CD4-positive, alpha-beta memory T cell (primary cell): ENCODE measurements at regions of chr11 and their contacts with region 1.

Region 1: GRCh38 chr11:62169091-62169847 is 20.7 kb upstream of the SCGB1D1 start:
- DNase-seq: no peak
- H3K4me3 ChIP-seq: no peak overlapping the region
- H3K4me3 Mint-ChIP-seq: no peak overlapping the region
- H3K27ac ChIP-seq: no peak overlapping the region
- H3K27ac Mint-ChIP-seq: no peak overlapping the region
- H3K4me1 ChIP-seq: no peaks in the 10 kb centered on the region
- H3K4me1 Mint-ChIP-seq: peaks cover 4 to 6% (median 5%) of the 10 kb centered on the region in 4 donors
- H3K27me3 ChIP-seq: no peaks in the 10 kb centered on the region
- H3K27me3 Mint-ChIP-seq: peaks cover 31 to 34% of the 10 kb centered on the region in 2 donors

Region 2: GRCh38 chr11:62217191-62217748 is 48.0 kb after region 1 on chr11:
- CTCF ChIA-PET with region 1: no interaction called
- POLR2A ChIA-PET with region 1: no interaction called
- intact Hi-C with region 1: no loop called
- DNase-seq: no peak
- H3K4me3 ChIP-seq: no peak overlapping the region
- H3K4me3 Mint-ChIP-seq: no peak overlapping the region
- H3K27ac ChIP-seq: no peak overlapping the region
- H3K27ac Mint-ChIP-seq: no peak overlapping the region
- H3K4me1 ChIP-seq: no peaks in the 10 kb centered on the region
- H3K4me1 Mint-ChIP-seq: no peaks in the 10 kb centered on the region
- H3K27me3 ChIP-seq: no peaks in the 10 kb centered on the region
- H3K27me3 Mint-ChIP-seq: peaks cover 11 to 22% of the 10 kb centered on the region in 2 donors

Region 3: GRCh38 chr11:62315431-62315830 is 146.2 kb after region 1 on chr11:
- CTCF ChIA-PET with region 1: interaction called, 10 read pairs
- POLR2A ChIA-PET with region 1: no interaction called
- intact Hi-C with region 1: loop called (anchors 1 kb)
- DNase-seq: no peak
- H3K4me3 ChIP-seq: no peak overlapping the region
- H3K4me3 Mint-ChIP-seq: no peak overlapping the region
- H3K27ac ChIP-seq: no peak overlapping the region
- H3K27ac Mint-ChIP-seq: no peak overlapping the region
- H3K4me1 ChIP-seq: peaks cover 9% of the 10 kb centered on the region
- H3K4me1 Mint-ChIP-seq: peaks cover 5 to 15% (median 12%) of the 10 kb centered on the region in 4 donors
- H3K27me3 ChIP-seq: peaks cover 3% of the 10 kb centered on the region
- H3K27me3 Mint-ChIP-seq: peaks cover 10 to 25% of the 10 kb centered on the region in 2 donors

Region 4: DNA sequence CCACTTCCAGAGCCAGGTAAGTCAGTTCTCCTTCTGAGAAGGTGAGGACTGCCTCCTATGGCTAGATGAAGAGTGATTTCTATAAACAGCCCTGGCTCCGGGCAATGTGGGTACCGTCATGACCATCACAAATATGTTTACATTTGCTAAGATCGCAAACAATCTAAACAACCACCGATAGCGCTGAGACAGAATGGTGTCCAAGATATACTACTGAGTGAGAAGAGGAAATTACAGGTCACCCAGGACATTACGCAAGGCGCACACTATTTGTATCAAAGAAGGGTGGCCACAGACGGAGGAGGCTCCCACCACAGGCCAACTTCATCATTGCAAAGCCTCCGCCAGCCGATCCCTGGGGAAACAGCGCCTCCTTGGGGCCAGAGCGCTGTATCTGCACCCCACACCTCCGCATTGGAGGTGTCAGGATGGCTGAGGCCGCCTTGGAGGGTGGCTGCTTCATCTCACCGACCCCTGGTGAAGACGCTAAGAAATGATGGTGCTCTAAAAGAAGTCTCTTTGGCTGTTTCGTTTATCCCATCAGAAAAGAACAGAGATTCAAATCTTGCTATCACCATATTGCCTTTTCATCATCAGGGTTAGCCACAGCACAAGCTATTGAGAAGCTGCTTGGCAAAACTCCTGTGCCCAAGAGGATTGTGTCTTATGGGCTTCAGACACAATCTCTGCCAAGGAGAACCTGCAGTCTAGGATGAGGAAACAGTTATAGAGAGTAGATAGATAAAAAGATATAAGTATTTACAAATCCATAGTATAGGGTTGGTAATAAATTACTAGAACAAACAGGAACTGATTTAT is 155.7 kb after region 1 on chr11:
- CTCF ChIA-PET with region 1: no interaction called
- POLR2A ChIA-PET with region 1: no interaction called
- intact Hi-C with region 1: loop called (anchors 1 kb)
- DNase-seq: peak; percentile 40 to 67 (median 49)
- H3K4me3 ChIP-seq: no peak overlapping the region
- H3K4me3 Mint-ChIP-seq: no peak overlapping the region
- H3K27ac ChIP-seq: no peak overlapping the region
- H3K27ac Mint-ChIP-seq: peak overlapping the region in 2 of 7 donors; percentile 33 to 67
- H3K4me1 ChIP-seq: no peaks in the 10 kb centered on the region
- H3K4me1 Mint-ChIP-seq: peaks cover 0 to under 1% (median 0%) of the 10 kb centered on the region in 4 donors
- H3K27me3 ChIP-seq: no peaks in the 10 kb centered on the region
- H3K27me3 Mint-ChIP-seq: peaks cover 8 to 11% of the 10 kb centered on the region in 2 donors